Activated CD4-positive, alpha-beta memory T cell treated with anti-CD3 and anti-CD28 coated beads for 36 hours (primary cell): ENCODE measurements at regions of chr4 and their contacts with region 1.

Region 1: GRCh38 chr4:70601422-70602039 is 9.5 kb downstream of the AMBN start:
- DNase-seq: peak; percentile 74
- H3K4me3 Mint-ChIP-seq: no peak overlapping the region
- H3K27ac Mint-ChIP-seq: no peak overlapping the region
- H3K4me1 Mint-ChIP-seq: no peaks in the 10 kb centered on the region
- H3K27me3 Mint-ChIP-seq: peaks cover 4% of the 10 kb centered on the region

Region 2: DNA sequence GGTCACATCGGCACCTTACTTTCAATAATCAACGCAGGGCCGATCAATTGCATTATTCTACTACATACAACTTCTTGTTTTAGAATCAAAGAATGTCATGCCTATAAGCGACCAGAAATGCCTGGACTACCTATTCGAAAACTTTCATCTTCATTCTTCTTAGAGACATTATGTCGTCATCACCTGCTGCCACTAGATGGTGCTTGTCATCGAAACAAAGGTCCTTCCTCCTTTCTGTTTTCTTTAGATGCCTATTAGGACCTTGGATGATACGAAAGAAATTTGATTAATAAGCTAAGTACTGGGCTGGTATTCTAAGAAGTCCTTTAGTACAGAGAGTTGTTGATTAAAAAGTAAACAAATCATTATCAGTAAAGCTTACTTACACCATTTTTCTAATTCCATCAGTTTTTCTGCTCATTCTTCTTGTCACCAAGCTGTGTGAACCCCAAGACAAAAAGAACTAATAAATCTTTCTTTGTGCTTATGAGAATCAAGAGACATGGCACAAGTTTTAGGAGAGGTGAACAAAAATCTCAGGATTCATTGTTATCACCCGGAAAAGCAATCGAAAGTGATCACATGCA is 582.8 kb after region 1 on chr4:
- CTCF ChIA-PET with region 1: no interaction called
- POLR2A ChIA-PET with region 1: no interaction called
- intact Hi-C with region 1: loop called (anchors 10 kb)
- DNase-seq: peak; percentile 44
- H3K4me3 Mint-ChIP-seq: no peak overlapping the region
- H3K27ac Mint-ChIP-seq: no peak overlapping the region
- H3K4me1 Mint-ChIP-seq: peaks cover 27% of the 10 kb centered on the region
- H3K27me3 Mint-ChIP-seq: peaks cover 27% of the 10 kb centered on the region

Region 3: GRCh38 chr4:71713611-71714203 is 1112.2 kb after region 1 on chr4:
- CTCF ChIA-PET with region 1: no interaction called
- POLR2A ChIA-PET with region 1: no interaction called
- intact Hi-C with region 1: loop called (anchors 2 kb)
- DNase-seq: no peak
- H3K4me3 Mint-ChIP-seq: no peak overlapping the region
- H3K27ac Mint-ChIP-seq: no peak overlapping the region
- H3K4me1 Mint-ChIP-seq: no peaks in the 10 kb centered on the region
- H3K27me3 Mint-ChIP-seq: peaks cover 2% of the 10 kb centered on the region

Region 4: GRCh38 chr4:72302981-72303704 is 1701.6 kb after region 1 on chr4:
- CTCF ChIA-PET with region 1: interaction called, 5 read pairs
- POLR2A ChIA-PET with region 1: no interaction called
- intact Hi-C with region 1: loop called (anchors 5 kb)
- DNase-seq: peak; percentile 40
- H3K4me3 Mint-ChIP-seq: no peak overlapping the region
- H3K27ac Mint-ChIP-seq: no peak overlapping the region
- H3K4me1 Mint-ChIP-seq: no peaks in the 10 kb centered on the region
- H3K27me3 Mint-ChIP-seq: no peaks in the 10 kb centered on the region